AG04449 (cell line): ENCODE measurements at regions of chr13 and their contacts with region 1.

Region 1: GRCh38 chr13:41075034-41075433 is 13.7 kb downstream of the WBP4 start:
- DNase-seq: no peak
- H3K4me3 ChIP-seq: no peak overlapping the region
- CTCF ChIP-seq: peak; percentile 12

Region 2: DNA sequence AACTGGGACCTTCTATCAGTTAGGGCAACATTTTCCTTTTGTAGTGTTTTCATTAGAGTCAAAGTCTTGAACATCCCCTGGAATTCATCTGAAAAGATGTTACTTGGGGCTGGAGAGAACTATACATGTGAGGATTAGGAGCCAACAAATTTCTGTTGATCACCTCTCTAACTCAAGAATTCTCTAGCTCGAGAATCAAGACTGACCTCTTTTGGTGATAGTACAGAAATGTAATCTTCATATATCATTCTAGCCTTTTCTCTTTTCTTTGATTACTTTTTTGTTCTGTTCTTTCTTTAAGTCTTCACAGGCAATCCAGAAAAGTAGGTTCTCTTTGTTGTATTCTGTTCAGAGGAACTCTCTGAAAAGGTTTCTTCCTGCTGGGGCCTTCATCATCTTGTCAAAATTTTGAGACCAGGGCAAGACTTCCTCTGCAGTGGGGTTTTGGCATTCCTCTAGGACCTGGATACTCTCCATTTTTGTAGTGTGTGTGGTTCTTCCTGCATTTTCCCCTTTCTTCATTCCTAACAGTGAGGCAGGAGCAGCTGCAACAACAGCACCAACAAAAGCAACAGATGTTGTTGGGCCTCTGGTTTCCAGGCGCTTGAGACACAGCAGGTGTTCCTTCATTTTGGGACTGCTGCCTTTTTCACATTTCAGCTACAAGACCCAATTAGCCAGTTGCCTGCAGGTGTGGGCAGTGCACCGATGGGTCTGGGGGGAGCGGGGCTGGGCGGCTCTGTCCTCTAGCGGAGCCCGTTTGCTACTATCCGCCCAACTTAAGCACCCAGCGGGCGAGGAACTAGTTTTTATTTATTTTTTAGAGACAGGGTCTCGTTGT is 82.1 kb before region 1 on chr13:
- CTCF ChIA-PET with region 1: no interaction called
- POLR2A ChIA-PET with region 1: no interaction called
- DNase-seq: no peak
- H3K4me3 ChIP-seq: no peak overlapping the region
- CTCF ChIP-seq: no peak

Region 3: DNA sequence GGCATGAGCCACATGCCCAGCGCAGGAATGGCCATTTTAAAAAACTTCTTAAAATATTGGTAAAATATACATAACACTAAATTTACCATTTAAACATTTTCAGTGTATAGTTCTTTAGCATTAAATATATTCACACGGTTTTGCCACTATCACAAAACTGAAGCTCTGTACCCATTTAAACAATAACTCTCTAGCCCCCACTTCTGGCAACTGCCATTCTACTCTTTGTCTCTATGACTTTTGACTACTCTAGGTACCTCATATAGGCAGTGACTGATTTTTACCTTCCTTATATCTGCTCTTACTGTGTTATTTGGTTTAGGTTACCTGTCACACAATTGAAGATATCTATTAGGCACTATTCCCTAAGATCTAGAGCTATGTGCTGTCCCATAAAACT is 121.6 kb after region 1 on chr13:
- CTCF ChIA-PET with region 1: interaction called, 27 read pairs
- POLR2A ChIA-PET with region 1: no interaction called
- DNase-seq: no peak
- H3K4me3 ChIP-seq: no peak overlapping the region
- CTCF ChIP-seq: peak; percentile 25